ENCODE measurements at regions of chr1 and their contacts with region 1.

Region 1: GRCh38 chr1:119743781-119744597 is 24.7 kb downstream of the HMGCS2 start:
- DNase-seq: peak; percentile 82
- H3K4me3 ChIP-seq: no peak overlapping the region
- H3K27ac ChIP-seq: no peak overlapping the region
- H3K4me1 ChIP-seq: peaks cover 0 to 9% of the 10 kb centered on the region in 2 experiments; a peak in 1 of 4 replicates
- H3K27me3 ChIP-seq: no peaks in the 10 kb centered on the region
- CTCF ChIP-seq: peak; percentile 83
- EP300 ChIP-seq: no peak
- RAD21 ChIP-seq: peak; percentile 78

Region 2: DNA sequence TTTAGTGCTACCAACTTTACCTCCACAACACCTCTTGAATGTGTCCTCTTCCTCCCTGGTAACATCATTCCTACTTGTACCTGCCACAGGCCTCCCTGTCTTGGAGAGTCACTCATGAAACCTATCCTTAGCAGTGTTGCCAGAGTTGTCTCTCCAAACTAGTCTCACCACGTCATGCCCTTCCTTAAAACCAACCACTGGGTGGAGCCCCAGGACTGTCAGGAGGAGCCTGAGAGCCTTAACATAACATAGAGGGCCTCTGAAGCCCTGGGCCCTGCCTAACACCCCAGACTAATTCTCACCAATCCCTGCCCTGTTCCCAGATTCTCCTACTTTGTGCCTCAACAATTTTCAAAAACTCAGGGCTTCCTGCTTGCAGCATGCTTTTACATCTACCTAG is 161.2 kb before region 1 on chr1:
- CTCF ChIA-PET with region 1: no interaction called
- POLR2A ChIA-PET with region 1: no interaction called
- DNase-seq: peak; percentile 19
- H3K4me3 ChIP-seq: no peak overlapping the region
- H3K27ac ChIP-seq: no peak overlapping the region
- H3K4me1 ChIP-seq: no peaks in the 10 kb centered on the region
- H3K27me3 ChIP-seq: no peaks in the 10 kb centered on the region
- CTCF ChIP-seq: peak; percentile 57
- EP300 ChIP-seq: no peak
- RAD21 ChIP-seq: peak; percentile 66

Region 3: GRCh38 chr1:119732465-119733168 is 11.4 kb before region 1 on chr1:
- CTCF ChIA-PET with region 1: interaction called, 63 read pairs
- POLR2A ChIA-PET with region 1: no interaction called
- DNase-seq: no peak
- H3K4me3 ChIP-seq: no peak overlapping the region
- H3K27ac ChIP-seq: no peak overlapping the region
- H3K4me1 ChIP-seq: peaks cover 0 to 14% of the 10 kb centered on the region in 2 experiments; a peak in 1 of 4 replicates
- H3K27me3 ChIP-seq: no peaks in the 10 kb centered on the region
- CTCF ChIP-seq: no peak
- EP300 ChIP-seq: no peak
- RAD21 ChIP-seq: no peak

Region 4: DNA sequence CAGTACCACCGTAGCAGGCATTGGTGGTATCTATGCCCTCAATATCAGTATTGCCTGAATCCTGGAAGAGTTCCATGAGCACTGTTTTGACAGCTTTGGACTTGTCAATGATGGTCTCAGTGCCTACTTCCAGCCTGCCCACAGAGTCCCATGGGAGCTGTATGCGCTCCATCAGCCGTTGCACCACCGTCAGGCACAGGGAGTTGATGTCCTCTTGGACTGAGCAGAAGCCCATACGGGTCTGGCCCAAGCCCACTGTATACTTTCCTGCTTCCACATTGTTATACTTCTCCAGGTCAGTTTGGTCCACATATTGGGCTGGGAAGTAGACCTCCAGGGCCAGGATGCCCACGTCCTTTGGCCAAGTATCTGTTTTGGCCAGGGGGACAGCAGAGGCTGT is 20.2 kb after region 1 on chr1:
- CTCF ChIA-PET with region 1: interaction called, 70 read pairs
- POLR2A ChIA-PET with region 1: no interaction called
- DNase-seq: no peak
- H3K4me3 ChIP-seq: no peak overlapping the region
- H3K27ac ChIP-seq: no peak overlapping the region
- H3K4me1 ChIP-seq: peaks cover 0 to 11% of the 10 kb centered on the region in 2 experiments; a peak in 1 of 4 replicates
- H3K27me3 ChIP-seq: 0 out of 2 replicates have a peak, but pooled peaks cover 5% of the 10 kb centered on the region
- CTCF ChIP-seq: no peak
- EP300 ChIP-seq: no peak
- RAD21 ChIP-seq: no peak

Region 5: DNA sequence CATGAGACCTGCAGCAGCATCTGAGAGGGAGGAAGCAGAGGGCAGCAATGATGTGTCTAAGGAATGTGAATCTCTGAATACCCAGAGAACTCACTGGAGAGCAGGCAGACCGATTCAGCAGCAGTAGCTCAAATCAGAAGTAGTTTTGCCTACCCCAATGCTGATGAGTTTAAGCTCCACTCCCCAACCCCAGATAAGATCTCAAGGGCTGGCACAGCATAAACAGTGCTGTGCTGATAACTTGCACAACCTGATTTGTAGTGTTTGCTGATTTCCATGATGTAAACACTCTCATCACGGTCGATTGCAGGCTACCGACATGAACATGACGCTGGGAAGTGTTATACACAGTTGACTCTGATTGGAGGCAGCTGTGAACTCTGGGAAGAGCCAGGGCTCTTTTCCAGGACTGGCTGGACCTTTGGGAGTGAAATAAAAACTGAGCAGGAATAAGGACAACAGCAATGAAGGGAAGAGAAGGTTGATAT is 35.9 kb after region 1 on chr1:
- CTCF ChIA-PET with region 1: interaction called, 18 read pairs
- POLR2A ChIA-PET with region 1: no interaction called
- DNase-seq: peak; percentile 52
- H3K4me3 ChIP-seq: peak overlapping the region in 1 of 2 experiments; percentile 31; a peak in 2 of 4 replicates
- H3K27ac ChIP-seq: peak overlapping the region in 1 of 2 experiments; percentile 43; a peak in 1 of 4 replicates
- H3K4me1 ChIP-seq: peaks cover 0 to 5% of the 10 kb centered on the region in 2 experiments; a peak in 1 of 4 replicates
- H3K27me3 ChIP-seq: peaks cover 4% of the 10 kb centered on the region; the same call in 1 of the 2 replicates
- CTCF ChIP-seq: no peak
- EP300 ChIP-seq: no peak
- RAD21 ChIP-seq: no peak

Region 6: DNA sequence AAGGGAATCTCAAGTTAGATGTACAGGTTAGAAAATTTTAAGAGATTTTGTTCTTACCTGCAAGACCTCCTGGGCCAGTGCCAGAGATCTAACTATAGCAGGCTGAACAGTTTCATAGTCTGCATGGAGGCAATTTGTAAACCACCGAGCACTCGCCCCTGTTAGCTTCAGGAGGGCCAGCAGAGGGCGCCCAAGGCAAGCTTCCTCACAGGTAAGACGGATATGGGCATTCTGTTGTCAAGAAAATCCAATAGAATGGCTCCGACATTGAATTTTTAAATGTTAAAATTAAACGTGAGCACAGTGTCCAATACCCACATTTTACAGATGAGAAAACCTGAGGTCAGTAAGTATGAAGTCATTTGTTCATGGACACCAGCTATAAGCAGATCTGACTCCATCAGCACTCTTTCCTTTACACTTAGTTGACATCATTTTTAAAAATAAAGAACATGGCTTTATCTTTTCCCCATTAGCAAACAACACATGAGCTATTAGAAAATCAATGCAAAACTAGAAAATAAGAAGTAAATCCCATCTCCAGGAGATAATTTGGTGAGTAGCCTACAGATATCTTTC is 65.1 kb after region 1 on chr1:
- CTCF ChIA-PET with region 1: interaction called, 18 read pairs
- POLR2A ChIA-PET with region 1: no interaction called
- DNase-seq: peak; percentile 74
- H3K4me3 ChIP-seq: no peak overlapping the region; a peak in 1 of 4 replicates
- H3K27ac ChIP-seq: no peak overlapping the region
- H3K4me1 ChIP-seq: peaks cover 0 to 2% of the 10 kb centered on the region in 2 experiments; a peak in 1 of 4 replicates
- H3K27me3 ChIP-seq: peaks cover 28% of the 10 kb centered on the region
- CTCF ChIP-seq: peak; percentile 97
- EP300 ChIP-seq: no peak
- RAD21 ChIP-seq: peak; percentile 85

Region 7: GRCh38 chr1:119838236-119838635 is 94.2 kb after region 1 on chr1:
- CTCF ChIA-PET with region 1: no interaction called
- POLR2A ChIA-PET with region 1: no interaction called
- DNase-seq: no peak
- H3K4me3 ChIP-seq: no peak overlapping the region
- H3K27ac ChIP-seq: no peak overlapping the region
- H3K4me1 ChIP-seq: no peaks in the 10 kb centered on the region
- H3K27me3 ChIP-seq: peaks cover 4% of the 10 kb centered on the region
- CTCF ChIP-seq: no peak
- EP300 ChIP-seq: no peak
- RAD21 ChIP-seq: no peak